K562 (cell line): ENCODE measurements at regions of chr20 and their contacts with region 1.

Region 1: GRCh38 chr20:49888345-49888966 is 26.9 kb downstream of the SPATA2 start:
- DNase-seq: peak; percentile 75 to 78 (median 77)
- ATAC-seq: peak; percentile 81
- H3K4me3 ChIP-seq: no peak overlapping the region
- H3K27ac ChIP-seq: no peak overlapping the region
- H3K4me1 ChIP-seq: peaks cover 8 to 44% of the 10 kb centered on the region in 2 experiments
- H3K27me3 ChIP-seq: no peaks in the 10 kb centered on the region
- CTCF ChIP-seq: peak; percentile 87 to 90 (median 87)
- EP300 ChIP-seq: no peak
- POLR2A ChIP-seq: no peak
- RAD21 ChIP-seq: peak; percentile 48 to 81

Region 2: GRCh38 chr20:49338061-49338460 is 550.4 kb before region 1 on chr20:
- CTCF ChIA-PET with region 1: interaction called, 18 read pairs
- POLR2A ChIA-PET with region 1: no interaction called
- in situ Hi-C with region 1: loop called (anchors 25 kb)
- intact Hi-C with region 1: no loop called
- DNase-seq: no peak
- ATAC-seq: no peak
- H3K4me3 ChIP-seq: no peak overlapping the region
- H3K27ac ChIP-seq: no peak overlapping the region
- H3K4me1 ChIP-seq: peaks cover 0 to 4% of the 10 kb centered on the region in 2 experiments; a peak in 2 of 5 replicates
- H3K27me3 ChIP-seq: peaks cover 5 to 31% of the 10 kb centered on the region in 2 experiments
- CTCF ChIP-seq: no peak
- EP300 ChIP-seq: no peak
- POLR2A ChIP-seq: no peak
- RAD21 ChIP-seq: no peak

Region 3: GRCh38 chr20:49344975-49345374 is 543.5 kb before region 1 on chr20:
- CTCF ChIA-PET with region 1: no interaction called
- POLR2A ChIA-PET with region 1: no interaction called
- in situ Hi-C with region 1: loop called (anchors 25 kb)
- intact Hi-C with region 1: no loop called
- DNase-seq: no peak
- ATAC-seq: no peak
- H3K4me3 ChIP-seq: no peak overlapping the region
- H3K27ac ChIP-seq: no peak overlapping the region
- H3K4me1 ChIP-seq: no peaks in the 10 kb centered on the region
- H3K27me3 ChIP-seq: peaks cover 29 to 40% of the 10 kb centered on the region in 2 experiments
- CTCF ChIP-seq: no peak
- EP300 ChIP-seq: no peak
- POLR2A ChIP-seq: no peak
- RAD21 ChIP-seq: no peak

Region 4: GRCh38 chr20:49541733-49542513 is 346.5 kb before region 1 on chr20:
- CTCF ChIA-PET with region 1: no interaction called
- POLR2A ChIA-PET with region 1: no interaction called
- in situ Hi-C with region 1: no loop called
- intact Hi-C with region 1: loop called (anchors 5 kb)
- DNase-seq: peak; percentile 80 to 90 (median 88)
- ATAC-seq: peak; percentile 86
- H3K4me3 ChIP-seq: no peak overlapping the region
- H3K27ac ChIP-seq: no peak overlapping the region
- H3K4me1 ChIP-seq: peaks cover 0 to 4% of the 10 kb centered on the region in 2 experiments; a peak in 1 of 5 replicates
- H3K27me3 ChIP-seq: peaks cover 2 to 18% of the 10 kb centered on the region in 2 experiments; a peak in 2 of 5 replicates
- CTCF ChIP-seq: peak; percentile 94 to 99 (median 99)
- EP300 ChIP-seq: 0 out of 2 replicates have a peak, but pooled peaks have one; percentile 26
- POLR2A ChIP-seq: no peak
- RAD21 ChIP-seq: peak; percentile 74 to 94

Region 5: DNA sequence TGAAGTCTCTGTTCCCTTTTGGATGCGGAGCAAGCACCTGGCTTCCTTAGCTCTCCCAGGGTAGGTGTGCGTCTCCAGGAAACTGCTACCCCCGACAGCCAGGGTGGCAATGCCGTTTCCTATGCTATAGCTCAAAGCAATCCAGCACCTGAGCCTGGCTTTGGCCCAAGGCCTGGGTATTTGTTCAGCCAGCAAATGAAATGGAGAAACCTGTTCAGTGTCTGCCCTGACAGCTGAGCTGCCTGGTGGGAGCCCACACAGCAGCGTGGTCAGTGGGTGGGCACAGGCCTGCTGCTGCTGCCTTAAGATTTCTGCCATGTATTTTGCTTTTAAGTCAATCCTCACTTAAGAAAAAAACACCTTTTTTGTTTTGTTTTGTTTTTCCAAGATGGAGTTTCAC is 13.1 kb after region 1 on chr20:
- CTCF ChIA-PET with region 1: no interaction called
- POLR2A ChIA-PET with region 1: interaction called, 16 read pairs
- in situ Hi-C with region 1: no loop called
- intact Hi-C with region 1: no loop called
- DNase-seq: no peak
- ATAC-seq: no peak
- H3K4me3 ChIP-seq: no peak overlapping the region
- H3K27ac ChIP-seq: no peak overlapping the region
- H3K4me1 ChIP-seq: peaks cover 0 to 12% of the 10 kb centered on the region in 2 experiments; a peak in 1 of 5 replicates
- H3K27me3 ChIP-seq: no peaks in the 10 kb centered on the region
- CTCF ChIP-seq: no peak
- EP300 ChIP-seq: no peak
- POLR2A ChIP-seq: no peak
- RAD21 ChIP-seq: no peak

Region 6: GRCh38 chr20:49928401-49929141 is 40.1 kb after region 1 on chr20:
- CTCF ChIA-PET with region 1: interaction called, 3 read pairs
- POLR2A ChIA-PET with region 1: interaction called, 3 read pairs
- in situ Hi-C with region 1: no loop called
- intact Hi-C with region 1: loop called (anchors 2 kb)
- DNase-seq: peak; percentile 76 to 88 (median 80)
- ATAC-seq: peak; percentile 95
- H3K4me3 ChIP-seq: no peak overlapping the region
- H3K27ac ChIP-seq: no peak overlapping the region
- H3K4me1 ChIP-seq: no peaks in the 10 kb centered on the region; a peak in 2 of 5 replicates
- H3K27me3 ChIP-seq: no peaks in the 10 kb centered on the region
- CTCF ChIP-seq: peak; percentile 85 to 95 (median 91)
- EP300 ChIP-seq: 0 out of 2 replicates have a peak, but pooled peaks have one; percentile 11
- POLR2A ChIP-seq: no peak
- RAD21 ChIP-seq: peak; percentile 66 to 82